K562 (cell line): ENCODE measurements at regions of chr6 and their contacts with region 1.

Region 1: DNA sequence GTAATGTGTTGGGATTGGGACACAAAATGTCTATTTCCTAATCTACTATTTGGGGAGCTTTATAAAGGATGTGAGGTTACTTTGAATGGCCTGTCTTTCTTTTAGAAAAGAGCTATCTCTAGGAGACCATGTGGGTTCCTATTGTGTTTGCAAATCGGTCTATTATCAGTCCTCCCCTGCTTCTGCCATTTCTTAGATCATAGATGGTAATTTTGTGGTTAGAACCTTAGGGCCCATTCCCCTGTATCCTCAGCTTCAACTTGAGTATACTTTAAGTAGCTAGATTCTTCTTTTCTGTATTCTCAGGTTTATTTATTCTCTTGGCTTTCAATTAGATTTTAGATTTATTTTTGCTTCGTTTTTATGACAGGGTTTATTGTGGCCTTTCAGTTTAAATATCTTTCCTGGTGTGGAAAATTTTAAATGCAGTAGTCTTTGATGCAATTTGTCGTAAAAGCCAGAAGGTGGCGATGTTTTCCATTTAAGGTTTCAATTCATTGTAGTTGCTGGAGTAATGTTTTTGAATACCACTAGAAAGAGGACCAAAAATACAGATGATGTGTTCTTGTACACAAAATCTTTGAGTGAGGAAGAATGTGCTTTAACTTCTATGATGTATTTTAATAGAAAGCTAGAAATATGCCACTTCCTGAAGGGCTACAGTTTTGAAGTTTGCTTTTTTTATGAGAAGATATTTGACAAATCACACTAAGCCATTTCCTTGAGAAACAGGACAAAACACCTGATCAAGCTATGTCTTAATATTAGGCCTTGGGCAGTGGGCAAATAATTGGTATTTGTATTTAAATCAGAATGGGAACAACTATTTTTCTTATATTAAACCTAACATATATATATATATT is 20.3 kb downstream of the TBPL1 start:
- DNase-seq: peak; percentile 35 to 74 (median 54)
- ATAC-seq: peak; percentile 81
- H3K4me3 ChIP-seq: no peak overlapping the region
- H3K27ac ChIP-seq: peak overlapping the region; percentile 67
- H3K4me1 ChIP-seq: peaks cover 3 to 20% of the 10 kb centered on the region in 2 experiments; a peak in 3 of 5 replicates
- H3K27me3 ChIP-seq: no peaks in the 10 kb centered on the region
- CTCF ChIP-seq: peak; percentile 56 to 83 (median 62); a peak in 5 of 6 replicates
- EP300 ChIP-seq: peak; percentile 36; the same call in 1 of the 2 replicates
- POLR2A ChIP-seq: no peak; the same call in 1 of the 2 replicates
- RAD21 ChIP-seq: peak; percentile 77 to 85

Region 2: DNA sequence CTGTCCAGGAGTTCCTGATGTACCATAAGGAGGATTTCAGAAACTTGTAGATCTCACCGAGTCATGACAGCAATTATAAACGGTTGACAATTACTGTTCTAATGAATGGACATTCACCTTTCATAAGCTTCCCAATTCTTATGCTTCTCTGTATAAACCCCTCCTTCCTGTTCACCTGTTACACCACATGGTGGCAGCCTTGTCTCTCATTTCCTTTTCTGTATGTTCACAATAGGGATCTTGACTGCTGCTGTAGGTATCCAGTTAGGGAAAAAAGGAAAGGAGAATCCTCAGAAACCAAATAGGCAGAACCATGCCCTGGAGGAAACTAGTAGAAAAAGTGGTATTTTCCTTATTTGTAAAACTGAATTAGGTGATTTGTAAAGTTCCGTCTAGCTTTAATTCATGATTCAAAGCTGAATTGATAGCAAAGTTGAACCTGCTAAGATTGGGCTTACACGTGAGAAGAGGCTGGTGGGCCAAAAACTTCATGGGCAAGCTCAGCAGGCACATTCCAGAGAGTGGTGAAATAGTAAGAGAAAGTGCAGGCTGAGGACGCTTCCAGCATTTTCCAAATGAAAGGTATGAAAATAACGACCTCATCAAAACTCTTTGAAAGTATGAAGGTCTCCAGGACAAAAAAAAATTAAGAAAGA is 49.3 kb before region 1 on chr6:
- CTCF ChIA-PET with region 1: interaction called, 7 read pairs
- POLR2A ChIA-PET with region 1: no interaction called
- in situ Hi-C with region 1: no loop called
- intact Hi-C with region 1: loop called (anchors 1 kb)
- DNase-seq: peak; percentile 55 to 84 (median 65)
- ATAC-seq: peak; percentile 94
- H3K4me3 ChIP-seq: no peak overlapping the region
- H3K27ac ChIP-seq: no peak overlapping the region
- H3K4me1 ChIP-seq: no peaks in the 10 kb centered on the region
- H3K27me3 ChIP-seq: no peaks in the 10 kb centered on the region
- CTCF ChIP-seq: peak; percentile 77 to 95 (median 82)
- EP300 ChIP-seq: no peak
- POLR2A ChIP-seq: no peak
- RAD21 ChIP-seq: peak; percentile 99 to 100

Region 3: GRCh38 chr6:133952815-133953633 is 20.3 kb before region 1 on chr6 and contains the start of gene TBPL1:
- CTCF ChIA-PET with region 1: no interaction called
- POLR2A ChIA-PET with region 1: interaction called, 7 read pairs
- in situ Hi-C with region 1: no loop called
- intact Hi-C with region 1: loop called (anchors 1 kb)
- DNase-seq: peak; percentile 90 to 99 (median 93)
- ATAC-seq: peak; percentile 78
- H3K4me3 ChIP-seq: peak within 1 kb of the TSS; percentile 92
- H3K27ac ChIP-seq: peak within 1 kb of the TSS; percentile 87
- H3K4me1 ChIP-seq: peaks cover 7 to 11% of the 10 kb centered on the region in 2 experiments; a peak in 2 of 5 replicates
- H3K27me3 ChIP-seq: no peaks in the 10 kb centered on the region
- CTCF ChIP-seq: no peak
- EP300 ChIP-seq: peak; percentile 67
- POLR2A ChIP-seq: peak; percentile 89
- RAD21 ChIP-seq: no peak
- polyA plus RNA-seq, gene TBPL1: 107 to 147 TPM

Region 4: GRCh38 chr6:133991096-133991593 is 17.8 kb after region 1 on chr6:
- CTCF ChIA-PET with region 1: no interaction called
- POLR2A ChIA-PET with region 1: interaction called, 57 read pairs
- in situ Hi-C with region 1: no loop called
- intact Hi-C with region 1: no loop called
- DNase-seq: peak in 1 of 4 experiments; percentile 25
- ATAC-seq: peak; percentile 61
- H3K4me3 ChIP-seq: no peak overlapping the region
- H3K27ac ChIP-seq: no peak overlapping the region
- H3K4me1 ChIP-seq: peaks cover 7 to 31% of the 10 kb centered on the region in 2 experiments
- H3K27me3 ChIP-seq: no peaks in the 10 kb centered on the region
- CTCF ChIP-seq: no peak
- EP300 ChIP-seq: no peak
- POLR2A ChIP-seq: no peak
- RAD21 ChIP-seq: no peak

Region 5: GRCh38 chr6:134063966-134064445 is 90.7 kb after region 1 on chr6:
- CTCF ChIA-PET with region 1: interaction called, 29 read pairs
- POLR2A ChIA-PET with region 1: interaction called, 3 read pairs
- in situ Hi-C with region 1: no loop called
- intact Hi-C with region 1: loop called (anchors 1 kb)
- DNase-seq: peak; percentile 65 to 88 (median 74)
- ATAC-seq: peak; percentile 94
- H3K4me3 ChIP-seq: no peak overlapping the region
- H3K27ac ChIP-seq: peak overlapping the region; percentile 40; the same call in 1 of the 3 replicates
- H3K4me1 ChIP-seq: peaks cover 6 to 18% of the 10 kb centered on the region in 2 experiments; a peak in 3 of 5 replicates
- H3K27me3 ChIP-seq: no peaks in the 10 kb centered on the region
- CTCF ChIP-seq: peak; percentile 90 to 99 (median 99)
- EP300 ChIP-seq: no peak
- POLR2A ChIP-seq: no peak
- RAD21 ChIP-seq: peak; percentile 76 to 89

Region 6: GRCh38 chr6:134080171-134080795 is 106.9 kb after region 1 on chr6:
- CTCF ChIA-PET with region 1: interaction called, 3 read pairs
- POLR2A ChIA-PET with region 1: no interaction called
- in situ Hi-C with region 1: loop called (anchors 5 kb)
- intact Hi-C with region 1: no loop called
- DNase-seq: peak in 1 of 4 experiments; percentile 54
- ATAC-seq: peak; percentile 68
- H3K4me3 ChIP-seq: no peak overlapping the region
- H3K27ac ChIP-seq: no peak overlapping the region
- H3K4me1 ChIP-seq: peaks cover 0 to 13% of the 10 kb centered on the region in 2 experiments; a peak in 4 of 5 replicates
- H3K27me3 ChIP-seq: no peaks in the 10 kb centered on the region
- CTCF ChIP-seq: no peak
- EP300 ChIP-seq: peak; percentile 64; the same call in 1 of the 2 replicates
- POLR2A ChIP-seq: no peak
- RAD21 ChIP-seq: no peak

Region 7: GRCh38 chr6:134299236-134299635 is 325.9 kb after region 1 on chr6:
- CTCF ChIA-PET with region 1: no interaction called
- POLR2A ChIA-PET with region 1: no interaction called
- in situ Hi-C with region 1: no loop called
- intact Hi-C with region 1: no loop called
- DNase-seq: no peak
- ATAC-seq: no peak
- H3K4me3 ChIP-seq: no peak overlapping the region
- H3K27ac ChIP-seq: no peak overlapping the region
- H3K4me1 ChIP-seq: peaks cover 15 to 25% of the 10 kb centered on the region in 2 experiments
- H3K27me3 ChIP-seq: no peaks in the 10 kb centered on the region
- CTCF ChIP-seq: no peak
- EP300 ChIP-seq: no peak
- POLR2A ChIP-seq: no peak
- RAD21 ChIP-seq: no peak